Vagina (tissue), 2 donors: ENCODE measurements at regions of chr5 and their contacts with region 1.

Region 1: DNA sequence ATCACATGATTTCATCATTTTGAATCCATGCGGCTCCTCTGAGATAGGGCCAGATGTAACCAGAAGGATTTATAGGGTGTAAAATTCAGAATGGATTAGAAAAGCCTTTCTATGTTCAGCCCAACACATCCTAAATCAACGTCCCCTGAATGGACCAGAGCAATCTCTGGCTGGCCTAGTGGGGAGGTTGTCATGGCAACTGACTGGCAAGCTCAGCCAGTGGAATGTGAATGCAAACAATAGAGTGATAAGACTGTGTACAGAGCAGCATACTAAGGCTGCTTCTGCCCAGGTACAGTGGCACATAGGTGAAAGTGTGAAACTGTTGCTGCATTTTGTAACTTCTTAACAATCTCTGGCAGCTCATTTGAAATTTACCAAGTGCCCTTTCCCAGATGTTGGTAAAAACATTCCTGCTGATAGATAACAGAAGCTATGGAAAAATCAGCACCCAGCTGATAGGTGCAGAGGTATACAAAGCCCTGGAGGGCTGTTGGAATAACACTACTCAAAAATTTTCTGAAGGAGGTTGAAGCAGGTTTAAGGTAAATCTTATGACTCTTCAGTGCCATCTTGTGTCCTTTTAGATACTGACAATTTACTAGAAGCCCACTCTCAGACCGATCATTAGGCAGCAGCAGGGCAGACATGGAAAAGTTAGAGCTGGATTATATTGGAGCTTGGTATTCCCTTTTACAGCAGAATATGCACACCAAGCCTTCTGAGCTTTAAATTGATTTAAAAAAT is 267.2 kb downstream of the RAB3C start:
- DNase-seq: no peak
- H3K4me3 ChIP-seq: no peak overlapping the region
- H3K27ac ChIP-seq: no peak overlapping the region
- H3K4me1 ChIP-seq: no peaks in the 10 kb centered on the region
- H3K27me3 ChIP-seq: no peaks in the 10 kb centered on the region
- CTCF ChIP-seq: peak in 1 of 3 experiments; percentile 14
- POLR2A ChIP-seq: no peak

Region 2: GRCh38 chr5:58498340-58498942 is 351.7 kb before region 1 on chr5:
- intact Hi-C with region 1: loop called (anchors 10 kb)
- DNase-seq: no peak
- H3K4me3 ChIP-seq: no peak overlapping the region
- H3K27ac ChIP-seq: no peak overlapping the region
- H3K4me1 ChIP-seq: no peaks in the 10 kb centered on the region
- H3K27me3 ChIP-seq: no peaks in the 10 kb centered on the region
- CTCF ChIP-seq: peak in 1 of 3 experiments; percentile 69
- POLR2A ChIP-seq: no peak

Region 3: DNA sequence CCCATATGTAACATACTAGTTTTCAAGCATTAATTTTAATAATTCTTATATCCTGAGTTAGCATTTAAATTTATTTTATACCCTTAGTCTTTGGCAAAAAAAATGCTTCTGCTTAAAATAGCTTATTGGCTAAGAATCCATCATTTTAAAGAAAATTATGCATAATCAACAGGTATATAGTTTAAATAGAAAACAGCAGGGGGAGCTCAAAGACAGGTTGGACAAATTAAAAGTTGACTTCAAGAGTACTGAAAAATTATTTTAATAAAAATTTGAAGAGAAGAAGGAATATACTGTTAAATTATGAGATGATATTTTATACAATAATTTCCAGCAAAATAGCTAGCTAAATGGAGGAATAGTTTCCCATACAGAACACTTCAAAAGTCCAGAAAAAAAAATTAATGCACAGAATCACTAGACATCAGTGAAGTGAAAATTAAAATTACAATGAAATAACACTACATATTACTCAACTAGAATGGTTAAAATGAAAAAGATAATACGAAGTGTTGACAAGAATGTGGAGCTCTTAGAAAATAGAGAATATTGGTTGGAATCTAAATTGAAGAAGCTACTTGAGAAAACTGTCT is 656.3 kb after region 1 on chr5:
- intact Hi-C with region 1: no loop called
- DNase-seq: no peak
- H3K4me3 ChIP-seq: no peak overlapping the region
- H3K27ac ChIP-seq: no peak overlapping the region
- H3K4me1 ChIP-seq: no peaks in the 10 kb centered on the region
- H3K27me3 ChIP-seq: no peaks in the 10 kb centered on the region
- CTCF ChIP-seq: peak in 1 of 3 experiments; percentile 10
- POLR2A ChIP-seq: no peak